CD4-positive, alpha-beta memory T cell (primary cell): ENCODE measurements at regions of chr20 and their contacts with region 1.

Region 1: GRCh38 chr20:33401184-33401920 is at the start of gene CDK5RAP1:
- DNase-seq: peak; percentile 82 to 88 (median 83)
- H3K4me3 ChIP-seq: peak within 1 kb of the TSS; percentile 100
- H3K4me3 Mint-ChIP-seq: peak within 1 kb of the TSS; percentile 93 to 98 (median 98)
- H3K27ac ChIP-seq: peak within 1 kb of the TSS; percentile 74
- H3K27ac Mint-ChIP-seq: peak within 1 kb of the TSS; percentile 6 to 95 (median 94)
- H3K4me1 ChIP-seq: peaks cover 52% of the 10 kb centered on the region
- H3K4me1 Mint-ChIP-seq: peaks cover 24 to 66% (median 46%) of the 10 kb centered on the region in 4 donors
- H3K27me3 ChIP-seq: no peaks in the 10 kb centered on the region
- H3K27me3 Mint-ChIP-seq: no peaks in the 10 kb centered on the region
- total RNA-seq, gene CDK5RAP1: 50.9 to 51.8 TPM

Region 2: GRCh38 chr20:33370296-33370695 is 31.1 kb before region 1 on chr20:
- CTCF ChIA-PET with region 1: no interaction called
- POLR2A ChIA-PET with region 1: interaction called, 5 read pairs
- intact Hi-C with region 1: loop called (anchors 2 kb)
- DNase-seq: peak; percentile 82 to 96 (median 87)
- H3K4me3 ChIP-seq: no peak overlapping the region
- H3K4me3 Mint-ChIP-seq: peak overlapping the region; percentile 27 to 84 (median 61)
- H3K27ac ChIP-seq: peak overlapping the region; percentile 70
- H3K27ac Mint-ChIP-seq: peak overlapping the region; percentile 88 to 99 (median 97)
- H3K4me1 ChIP-seq: peaks cover 34% of the 10 kb centered on the region
- H3K4me1 Mint-ChIP-seq: peaks cover 16 to 50% (median 33%) of the 10 kb centered on the region in 4 donors
- H3K27me3 ChIP-seq: no peaks in the 10 kb centered on the region
- H3K27me3 Mint-ChIP-seq: no peaks in the 10 kb centered on the region

Region 3: GRCh38 chr20:33443512-33444239 is 42.3 kb after region 1 on chr20 and contains the start of gene SNTA1:
- CTCF ChIA-PET with region 1: interaction called, 5 read pairs
- POLR2A ChIA-PET with region 1: interaction called, 16 read pairs
- intact Hi-C with region 1: loop called (anchors 1 kb)
- DNase-seq: peak; percentile 80 to 88 (median 81)
- H3K4me3 ChIP-seq: peak within 1 kb of the TSS; percentile 42 to 85
- H3K4me3 Mint-ChIP-seq: peak within 1 kb of the TSS; percentile 92 to 97 (median 92)
- H3K27ac ChIP-seq: peak within 1 kb of the TSS; percentile 74
- H3K27ac Mint-ChIP-seq: peak within 1 kb of the TSS; percentile 90 to 97 (median 94)
- H3K4me1 ChIP-seq: peaks cover 17% of the 10 kb centered on the region
- H3K4me1 Mint-ChIP-seq: peaks cover 14 to 28% (median 22%) of the 10 kb centered on the region in 4 donors
- H3K27me3 ChIP-seq: no peaks in the 10 kb centered on the region
- H3K27me3 Mint-ChIP-seq: no peaks in the 10 kb centered on the region
- total RNA-seq, gene SNTA1: 5.1 to 5.7 TPM

Region 4: DNA sequence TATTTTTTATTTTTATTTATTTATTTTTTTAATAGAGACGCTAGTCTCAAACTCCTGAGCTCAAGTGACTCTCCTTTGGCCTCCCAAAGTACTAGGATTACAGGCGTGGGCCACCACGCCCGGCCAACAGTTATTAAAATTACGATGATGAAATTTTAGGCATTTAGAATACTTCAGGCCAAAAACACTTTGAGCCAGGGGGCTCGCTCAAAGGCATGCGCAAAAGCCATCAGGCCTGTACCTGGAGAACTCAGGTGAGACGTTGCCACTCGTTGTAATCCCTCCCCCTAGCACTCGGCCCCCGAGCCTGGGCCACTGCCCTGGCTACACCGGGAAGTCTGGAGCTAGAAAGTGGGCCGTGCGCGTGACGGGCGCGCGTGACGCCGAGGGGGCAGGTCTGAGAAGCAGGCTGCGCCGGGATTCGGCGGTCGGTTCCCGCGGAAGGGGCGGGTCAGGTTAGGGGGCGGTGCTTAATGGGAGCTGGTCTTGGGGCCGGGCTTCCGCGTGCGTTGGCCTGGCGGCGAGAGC is 88.2 kb after region 1 on chr20:
- CTCF ChIA-PET with region 1: no interaction called
- POLR2A ChIA-PET with region 1: interaction called, 17 read pairs
- intact Hi-C with region 1: no loop called
- DNase-seq: peak; percentile 98 to 99 (median 99)
- H3K4me3 ChIP-seq: peak overlapping the region; percentile 61 to 70
- H3K4me3 Mint-ChIP-seq: peak overlapping the region; percentile 81 to 96 (median 86)
- H3K27ac ChIP-seq: peak overlapping the region; percentile 89
- H3K27ac Mint-ChIP-seq: peak overlapping the region; percentile 92 to 95 (median 94)
- H3K4me1 ChIP-seq: peaks cover 16% of the 10 kb centered on the region
- H3K4me1 Mint-ChIP-seq: peaks cover 8 to 24% (median 18%) of the 10 kb centered on the region in 4 donors
- H3K27me3 ChIP-seq: no peaks in the 10 kb centered on the region
- H3K27me3 Mint-ChIP-seq: no peaks in the 10 kb centered on the region

Region 5: GRCh38 chr20:33686100-33686983 is 285.0 kb after region 1 on chr20 and contains the start of gene E2F1:
- CTCF ChIA-PET with region 1: no interaction called
- POLR2A ChIA-PET with region 1: no interaction called
- intact Hi-C with region 1: loop called (anchors 1 kb)
- DNase-seq: peak; percentile 91 to 95 (median 93)
- H3K4me3 ChIP-seq: peak within 1 kb of the TSS in 1 of 2 donors; percentile 38
- H3K4me3 Mint-ChIP-seq: peak within 1 kb of the TSS; percentile 82 to 89 (median 86)
- H3K27ac ChIP-seq: peak within 1 kb of the TSS; percentile 54
- H3K27ac Mint-ChIP-seq: peak within 1 kb of the TSS; percentile 84 to 94 (median 91)
- H3K4me1 ChIP-seq: peaks cover 40% of the 10 kb centered on the region
- H3K4me1 Mint-ChIP-seq: peaks cover 26 to 62% (median 43%) of the 10 kb centered on the region in 4 donors
- H3K27me3 ChIP-seq: no peaks in the 10 kb centered on the region
- H3K27me3 Mint-ChIP-seq: no peaks in the 10 kb centered on the region
- total RNA-seq, gene E2F1: 2.2 to 2.6 TPM

Region 6: DNA sequence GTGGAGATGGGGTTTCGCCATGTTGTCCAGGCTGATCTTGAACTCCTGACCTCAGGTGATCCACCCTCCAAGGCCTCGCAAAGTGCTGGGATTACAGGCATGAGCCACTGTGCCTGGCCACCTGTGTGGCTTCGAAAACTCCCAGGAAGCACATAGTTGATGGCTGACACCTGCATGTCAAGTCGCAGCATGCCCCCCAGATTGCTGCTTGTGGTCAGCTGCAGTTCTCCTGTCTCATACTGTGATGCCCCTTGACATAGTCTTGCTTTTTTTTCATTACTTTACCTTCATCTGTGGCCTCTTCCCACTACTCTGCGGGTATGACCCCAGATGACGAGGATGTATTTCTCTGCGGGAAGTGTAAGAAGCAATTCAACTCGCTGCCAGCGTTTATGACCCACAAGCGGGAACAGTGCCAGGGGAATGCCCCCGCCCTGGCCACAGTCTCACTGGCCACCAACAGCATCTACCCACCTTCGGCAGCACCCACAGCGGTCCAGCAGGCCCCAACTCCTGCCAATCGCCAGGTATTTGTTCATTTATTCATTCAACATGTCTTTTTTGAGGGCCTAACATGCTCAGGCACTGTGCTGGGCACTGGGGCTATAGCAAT is 343.5 kb after region 1 on chr20:
- CTCF ChIA-PET with region 1: no interaction called
- POLR2A ChIA-PET with region 1: no interaction called
- intact Hi-C with region 1: no loop called
- DNase-seq: no peak
- H3K4me3 ChIP-seq: no peak overlapping the region
- H3K4me3 Mint-ChIP-seq: no peak overlapping the region
- H3K27ac ChIP-seq: no peak overlapping the region
- H3K27ac Mint-ChIP-seq: peak overlapping the region in 1 of 7 donors; percentile 3
- H3K4me1 ChIP-seq: no peaks in the 10 kb centered on the region
- H3K4me1 Mint-ChIP-seq: peaks cover 0 to 3% (median 0%) of the 10 kb centered on the region in 4 donors
- H3K27me3 ChIP-seq: no peaks in the 10 kb centered on the region
- H3K27me3 Mint-ChIP-seq: no peaks in the 10 kb centered on the region